CD8-positive, alpha-beta T cell (primary cell): ENCODE measurements at regions of chr15 and their contacts with region 1.

Region 1: GRCh38 chr15:87292723-87293403 is 963.7 kb downstream of the NTRK3 start:
- DNase-seq: no peak
- ATAC-seq: no peak
- H3K4me3 ChIP-seq: no peak overlapping the region
- H3K4me3 Mint-ChIP-seq: no peak overlapping the region
- H3K27ac ChIP-seq: no peak overlapping the region
- H3K27ac Mint-ChIP-seq: no peak overlapping the region
- H3K4me1 ChIP-seq: no peaks in the 10 kb centered on the region
- H3K4me1 Mint-ChIP-seq: no peaks in the 10 kb centered on the region
- H3K27me3 ChIP-seq: no peaks in the 10 kb centered on the region
- H3K27me3 Mint-ChIP-seq: no peaks in the 10 kb centered on the region
- CTCF ChIP-seq: no peak

Region 2: DNA sequence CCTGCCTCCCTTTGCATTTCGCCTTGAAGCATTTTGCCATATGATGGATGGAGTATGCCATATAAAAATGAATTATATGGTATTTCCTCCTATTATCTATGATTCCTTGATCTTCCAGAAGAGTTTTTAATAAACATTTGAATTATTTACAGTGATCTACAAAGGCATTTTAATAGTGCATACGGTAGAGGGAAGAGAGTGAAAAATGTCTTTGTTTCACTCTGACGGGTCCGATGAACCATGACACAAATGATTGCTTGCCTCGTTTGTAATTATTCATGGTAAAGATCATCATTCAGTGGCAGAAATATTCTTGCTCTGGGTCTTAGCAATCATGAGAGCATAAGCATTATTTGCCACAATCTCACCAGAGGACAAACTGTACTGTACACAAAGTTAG is 47.3 kb before region 1 on chr15:
- CTCF ChIA-PET with region 1: no interaction called
- POLR2A ChIA-PET with region 1: no interaction called
- intact Hi-C with region 1: loop called in 1 of 2 experiments (anchors 10 kb)
- DNase-seq: no peak
- ATAC-seq: no peak
- H3K4me3 ChIP-seq: no peak overlapping the region
- H3K4me3 Mint-ChIP-seq: no peak overlapping the region
- H3K27ac ChIP-seq: no peak overlapping the region
- H3K27ac Mint-ChIP-seq: no peak overlapping the region
- H3K4me1 ChIP-seq: no peaks in the 10 kb centered on the region
- H3K4me1 Mint-ChIP-seq: no peaks in the 10 kb centered on the region
- H3K27me3 ChIP-seq: no peaks in the 10 kb centered on the region
- H3K27me3 Mint-ChIP-seq: no peaks in the 10 kb centered on the region
- CTCF ChIP-seq: no peak